MCF 10A (cell line): ENCODE measurements at regions of chr12 and their contacts with region 1.

Region 1: GRCh38 chr12:112252184-112252583 is 126.8 kb downstream of the TRAFD1 start:
- DNase-seq: peak; percentile 30
- H3K4me3 Mint-ChIP-seq: no peak overlapping the region
- H3K27ac Mint-ChIP-seq: peak overlapping the region; percentile 0
- H3K4me1 Mint-ChIP-seq: peaks cover 4% of the 10 kb centered on the region
- H3K27me3 Mint-ChIP-seq: no peaks in the 10 kb centered on the region
- CTCF ChIP-seq: no peak

Region 2: GRCh38 chr12:111616177-111616623 is 636.0 kb before region 1 on chr12:
- CTCF ChIA-PET with region 1: interaction called, 11 read pairs
- POLR2A ChIA-PET with region 1: no interaction called
- intact Hi-C with region 1: no loop called
- DNase-seq: no peak
- H3K4me3 Mint-ChIP-seq: no peak overlapping the region
- H3K27ac Mint-ChIP-seq: no peak overlapping the region
- H3K4me1 Mint-ChIP-seq: no peaks in the 10 kb centered on the region
- H3K27me3 Mint-ChIP-seq: no peaks in the 10 kb centered on the region
- CTCF ChIP-seq: no peak

Region 3: GRCh38 chr12:112304436-112304835 is 52.3 kb after region 1 on chr12:
- CTCF ChIA-PET with region 1: no interaction called
- POLR2A ChIA-PET with region 1: no interaction called
- intact Hi-C with region 1: no loop called
- DNase-seq: no peak
- H3K4me3 Mint-ChIP-seq: no peak overlapping the region
- H3K27ac Mint-ChIP-seq: no peak overlapping the region
- H3K4me1 Mint-ChIP-seq: no peaks in the 10 kb centered on the region
- H3K27me3 Mint-ChIP-seq: no peaks in the 10 kb centered on the region
- CTCF ChIP-seq: no peak

Region 4: DNA sequence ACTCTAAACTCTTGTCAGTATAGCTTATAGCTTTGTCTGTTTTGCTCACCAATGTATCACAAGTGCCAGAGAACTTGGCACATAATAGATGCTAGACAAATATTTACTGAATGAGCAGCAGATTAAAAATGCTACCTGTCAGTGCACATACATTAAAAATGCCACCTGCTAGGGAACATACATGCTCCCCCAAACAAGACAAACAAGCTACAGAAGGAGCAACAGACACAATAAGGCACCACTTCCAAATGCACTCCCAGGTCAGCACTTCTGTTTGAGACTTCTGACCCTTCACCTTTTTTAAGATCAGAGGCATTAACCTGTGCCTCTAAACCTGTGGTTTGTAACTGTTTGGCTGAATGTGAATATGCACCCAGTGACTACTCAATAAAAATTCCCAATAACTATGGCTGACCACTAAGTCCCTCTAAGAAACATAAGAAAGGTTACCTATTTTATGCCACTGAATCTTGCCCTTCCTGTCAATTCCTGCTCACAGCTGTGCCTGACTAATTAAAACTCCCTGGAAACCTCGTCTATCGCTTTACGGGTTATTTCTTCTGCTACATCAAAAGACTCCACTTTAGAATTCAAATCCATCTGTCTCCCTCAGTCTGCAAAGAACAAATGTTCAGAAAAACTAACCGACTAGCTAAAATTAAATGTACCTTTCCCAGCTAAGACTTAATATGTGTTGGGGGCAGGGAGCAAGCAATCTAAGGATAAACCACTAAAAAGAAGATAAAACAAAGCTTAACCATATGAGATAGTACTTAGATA is 89.1 kb after region 1 on chr12:
- CTCF ChIA-PET with region 1: no interaction called
- POLR2A ChIA-PET with region 1: no interaction called
- intact Hi-C with region 1: no loop called
- DNase-seq: no peak
- H3K4me3 Mint-ChIP-seq: no peak overlapping the region
- H3K27ac Mint-ChIP-seq: no peak overlapping the region
- H3K4me1 Mint-ChIP-seq: peaks cover 2% of the 10 kb centered on the region
- H3K27me3 Mint-ChIP-seq: no peaks in the 10 kb centered on the region
- CTCF ChIP-seq: no peak